CD8-positive, alpha-beta T cell (primary cell): ENCODE measurements at regions of chr7 and their contacts with region 1.

Region 1: GRCh38 chr7:100852048-100852872 is at the start of gene SLC12A9:
- DNase-seq: peak; percentile 67 to 93 (median 85)
- ATAC-seq: peak; percentile 92
- H3K4me3 ChIP-seq: peak within 1 kb of the TSS; percentile 84 to 98
- H3K4me3 Mint-ChIP-seq: peak within 1 kb of the TSS; percentile 88
- H3K27ac ChIP-seq: peak within 1 kb of the TSS; percentile 42 to 64
- H3K27ac Mint-ChIP-seq: peak within 1 kb of the TSS; percentile 90
- H3K4me1 ChIP-seq: peaks cover 18% of the 10 kb centered on the region
- H3K4me1 Mint-ChIP-seq: peaks cover 20% of the 10 kb centered on the region
- H3K27me3 ChIP-seq: no peaks in the 10 kb centered on the region
- H3K27me3 Mint-ChIP-seq: no peaks in the 10 kb centered on the region
- CTCF ChIP-seq: peak; percentile 85
- total RNA-seq, gene SLC12A9: 23.4 to 26.6 TPM

Region 2: GRCh38 chr7:100366411-100367238 is 485.6 kb before region 1 on chr7:
- CTCF ChIA-PET with region 1: no interaction called
- POLR2A ChIA-PET with region 1: no interaction called
- intact Hi-C with region 1: no loop called
- DNase-seq: peak in 4 of 9 experiments; percentile 37 to 60 (median 41)
- ATAC-seq: peak; percentile 57
- H3K4me3 ChIP-seq: no peak overlapping the region
- H3K4me3 Mint-ChIP-seq: no peak overlapping the region
- H3K27ac ChIP-seq: peak overlapping the region in 1 of 2 experiments; percentile 70
- H3K27ac Mint-ChIP-seq: peak overlapping the region; percentile 86
- H3K4me1 ChIP-seq: peaks cover 14% of the 10 kb centered on the region
- H3K4me1 Mint-ChIP-seq: peaks cover 38% of the 10 kb centered on the region
- H3K27me3 ChIP-seq: no peaks in the 10 kb centered on the region
- H3K27me3 Mint-ChIP-seq: no peaks in the 10 kb centered on the region
- CTCF ChIP-seq: no peak

Region 3: GRCh38 chr7:100469227-100470044 is 382.8 kb before region 1 on chr7:
- CTCF ChIA-PET with region 1: no interaction called
- POLR2A ChIA-PET with region 1: no interaction called
- intact Hi-C with region 1: loop called in 1 of 2 experiments (anchors 2 kb)
- DNase-seq: peak; percentile 71 to 93 (median 86)
- ATAC-seq: peak; percentile 97
- H3K4me3 ChIP-seq: no peak overlapping the region
- H3K4me3 Mint-ChIP-seq: no peak overlapping the region
- H3K27ac ChIP-seq: peak overlapping the region in 1 of 2 experiments; percentile 20
- H3K27ac Mint-ChIP-seq: peak overlapping the region; percentile 73
- H3K4me1 ChIP-seq: peaks cover 25% of the 10 kb centered on the region
- H3K4me1 Mint-ChIP-seq: peaks cover 34% of the 10 kb centered on the region
- H3K27me3 ChIP-seq: no peaks in the 10 kb centered on the region
- H3K27me3 Mint-ChIP-seq: no peaks in the 10 kb centered on the region
- CTCF ChIP-seq: peak; percentile 84

Region 4: DNA sequence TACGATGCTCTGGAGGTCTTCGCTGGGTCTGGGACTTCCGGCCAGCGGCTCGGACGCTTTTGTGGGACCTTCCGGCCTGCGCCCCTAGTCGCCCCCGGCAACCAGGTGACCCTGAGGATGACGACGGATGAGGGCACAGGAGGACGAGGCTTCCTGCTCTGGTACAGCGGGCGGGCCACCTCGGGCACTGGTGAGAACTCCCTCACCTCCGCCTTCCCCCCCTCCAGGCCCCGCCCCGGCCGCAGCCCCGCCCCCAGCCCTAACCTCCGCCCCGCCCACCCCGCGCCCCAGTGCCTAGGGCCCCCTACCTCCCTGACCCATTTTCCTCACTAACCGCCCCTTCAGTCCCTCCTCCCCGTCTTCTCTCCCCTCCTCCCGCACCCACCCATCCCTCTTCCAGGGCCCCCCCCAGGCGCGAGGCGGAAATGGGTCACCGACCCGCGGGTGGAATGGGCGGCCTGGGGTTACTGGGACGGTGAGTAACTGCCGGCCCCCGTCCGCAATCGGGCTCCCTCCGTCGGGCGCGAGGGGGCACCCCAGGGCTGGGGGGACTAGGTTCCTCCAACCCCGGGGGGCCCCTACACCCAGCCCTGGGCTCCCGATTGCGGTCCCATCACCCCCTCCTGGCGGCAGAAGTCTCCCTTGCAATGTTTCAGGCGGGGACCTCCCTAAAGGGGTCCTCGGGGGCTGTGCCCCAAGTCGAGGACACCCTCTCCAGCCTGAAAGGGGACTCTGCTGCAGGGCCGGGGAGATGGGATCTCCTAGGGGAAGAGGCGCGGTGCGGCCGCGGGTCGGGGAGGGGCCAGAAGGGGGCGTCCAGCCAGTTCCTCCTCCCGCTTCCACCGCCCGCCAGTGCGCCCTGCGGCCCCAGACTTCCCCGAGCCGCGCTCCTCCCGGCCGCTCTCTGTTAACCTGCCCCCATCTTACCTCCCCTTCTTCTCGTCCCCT is 248.0 kb before region 1 on chr7:
- CTCF ChIA-PET with region 1: no interaction called
- POLR2A ChIA-PET with region 1: no interaction called
- intact Hi-C with region 1: loop called in 1 of 2 experiments (anchors 5 kb)
- DNase-seq: peak; percentile 45 to 87 (median 77)
- ATAC-seq: peak; percentile 76
- H3K4me3 ChIP-seq: peak overlapping the region; percentile 62 to 79
- H3K4me3 Mint-ChIP-seq: peak overlapping the region; percentile 85
- H3K27ac ChIP-seq: peak overlapping the region; percentile 53 to 70
- H3K27ac Mint-ChIP-seq: peak overlapping the region; percentile 87
- H3K4me1 ChIP-seq: peaks cover 19% of the 10 kb centered on the region
- H3K4me1 Mint-ChIP-seq: peaks cover 22% of the 10 kb centered on the region
- H3K27me3 ChIP-seq: peaks cover 0 to 3% of the 10 kb centered on the region in 2 experiments
- H3K27me3 Mint-ChIP-seq: no peaks in the 10 kb centered on the region
- CTCF ChIP-seq: peak; percentile 50

Region 5: GRCh38 chr7:100803398-100804233 is 48.6 kb before region 1 on chr7:
- CTCF ChIA-PET with region 1: interaction called, 79 read pairs
- POLR2A ChIA-PET with region 1: interaction called, 3 read pairs
- intact Hi-C with region 1: loop called (anchors 1 kb)
- DNase-seq: peak in 5 of 9 experiments; percentile 6 to 59 (median 25)
- ATAC-seq: peak; percentile 66
- H3K4me3 ChIP-seq: no peak overlapping the region
- H3K4me3 Mint-ChIP-seq: no peak overlapping the region
- H3K27ac ChIP-seq: no peak overlapping the region
- H3K27ac Mint-ChIP-seq: no peak overlapping the region
- H3K4me1 ChIP-seq: no peaks in the 10 kb centered on the region
- H3K4me1 Mint-ChIP-seq: peaks cover 2% of the 10 kb centered on the region
- H3K27me3 ChIP-seq: no peaks in the 10 kb centered on the region
- H3K27me3 Mint-ChIP-seq: peaks cover 4% of the 10 kb centered on the region
- CTCF ChIP-seq: no peak

Region 6: DNA sequence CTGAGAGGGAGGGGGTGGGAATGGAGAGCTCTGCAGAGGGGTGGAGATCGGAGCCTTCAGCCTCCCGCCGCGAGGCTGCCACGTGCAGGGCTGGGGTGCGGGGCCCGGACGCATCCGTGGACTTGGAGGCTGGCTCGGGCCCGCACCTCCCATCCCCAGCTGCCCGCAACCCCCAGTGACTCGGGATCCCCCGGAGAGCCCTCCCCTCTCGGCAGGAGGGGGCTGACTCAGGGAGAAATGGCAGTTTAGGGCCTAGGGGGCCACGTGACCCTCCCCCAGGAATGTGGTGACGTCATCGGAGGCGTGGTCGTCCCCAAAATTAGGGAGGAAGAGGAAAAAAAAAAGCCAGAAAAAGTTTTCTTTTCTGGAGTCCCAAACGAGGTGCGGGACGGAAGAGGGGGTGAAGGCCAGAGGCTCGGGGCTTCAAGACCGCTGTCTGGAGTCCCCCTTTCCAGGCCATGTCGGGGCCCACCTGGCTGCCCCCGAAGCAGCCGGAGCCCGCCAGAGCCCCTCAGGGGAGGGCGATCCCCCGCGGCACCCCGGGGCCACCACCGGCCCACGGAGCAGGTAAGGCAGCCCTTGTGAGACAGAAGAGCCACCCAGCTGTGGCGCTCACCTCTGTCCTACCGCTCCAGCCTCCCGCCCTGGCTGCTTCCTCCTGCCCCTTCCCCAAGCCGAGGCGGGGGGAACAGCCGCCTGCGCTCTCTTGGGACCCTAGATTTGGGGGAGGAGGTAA is 14.9 kb after region 1 on chr7 and contains the start of gene TRIP6:
- CTCF ChIA-PET with region 1: no interaction called
- POLR2A ChIA-PET with region 1: interaction called, 3 read pairs
- intact Hi-C with region 1: loop called in 1 of 2 experiments (anchors 1 kb)
- DNase-seq: peak in 6 of 9 experiments; percentile 41 to 62 (median 50)
- ATAC-seq: peak; percentile 48
- H3K4me3 ChIP-seq: peak within 1 kb of the TSS; percentile 36 to 45
- H3K4me3 Mint-ChIP-seq: peak within 1 kb of the TSS; percentile 78
- H3K27ac ChIP-seq: peak within 1 kb of the TSS; percentile 54 to 56
- H3K27ac Mint-ChIP-seq: peak within 1 kb of the TSS; percentile 66
- H3K4me1 ChIP-seq: peaks cover 23% of the 10 kb centered on the region
- H3K4me1 Mint-ChIP-seq: peaks cover 19% of the 10 kb centered on the region
- H3K27me3 ChIP-seq: peaks cover 0 to 2% of the 10 kb centered on the region in 2 experiments
- H3K27me3 Mint-ChIP-seq: no peaks in the 10 kb centered on the region
- CTCF ChIP-seq: no peak
- total RNA-seq, gene TRIP6: 3.9 to 4.1 TPM

Region 7: GRCh38 chr7:100889761-100890634 is 37.7 kb after region 1 on chr7:
- CTCF ChIA-PET with region 1: interaction called, 11 read pairs
- POLR2A ChIA-PET with region 1: interaction called, 9 read pairs
- intact Hi-C with region 1: loop called in 1 of 2 experiments (anchors 1 kb)
- DNase-seq: peak; percentile 79 to 97 (median 91)
- ATAC-seq: peak; percentile 82
- H3K4me3 ChIP-seq: peak overlapping the region; percentile 65 to 90
- H3K4me3 Mint-ChIP-seq: peak overlapping the region; percentile 87
- H3K27ac ChIP-seq: peak overlapping the region; percentile 22 to 44
- H3K27ac Mint-ChIP-seq: peak overlapping the region; percentile 72
- H3K4me1 ChIP-seq: peaks cover 40% of the 10 kb centered on the region
- H3K4me1 Mint-ChIP-seq: peaks cover 42% of the 10 kb centered on the region
- H3K27me3 ChIP-seq: peaks cover 0 to 20% of the 10 kb centered on the region in 2 experiments
- H3K27me3 Mint-ChIP-seq: peaks cover 13% of the 10 kb centered on the region
- CTCF ChIP-seq: no peak